ENCODE measurements at regions of chr2 and their contacts with region 1.

Region 1: DNA sequence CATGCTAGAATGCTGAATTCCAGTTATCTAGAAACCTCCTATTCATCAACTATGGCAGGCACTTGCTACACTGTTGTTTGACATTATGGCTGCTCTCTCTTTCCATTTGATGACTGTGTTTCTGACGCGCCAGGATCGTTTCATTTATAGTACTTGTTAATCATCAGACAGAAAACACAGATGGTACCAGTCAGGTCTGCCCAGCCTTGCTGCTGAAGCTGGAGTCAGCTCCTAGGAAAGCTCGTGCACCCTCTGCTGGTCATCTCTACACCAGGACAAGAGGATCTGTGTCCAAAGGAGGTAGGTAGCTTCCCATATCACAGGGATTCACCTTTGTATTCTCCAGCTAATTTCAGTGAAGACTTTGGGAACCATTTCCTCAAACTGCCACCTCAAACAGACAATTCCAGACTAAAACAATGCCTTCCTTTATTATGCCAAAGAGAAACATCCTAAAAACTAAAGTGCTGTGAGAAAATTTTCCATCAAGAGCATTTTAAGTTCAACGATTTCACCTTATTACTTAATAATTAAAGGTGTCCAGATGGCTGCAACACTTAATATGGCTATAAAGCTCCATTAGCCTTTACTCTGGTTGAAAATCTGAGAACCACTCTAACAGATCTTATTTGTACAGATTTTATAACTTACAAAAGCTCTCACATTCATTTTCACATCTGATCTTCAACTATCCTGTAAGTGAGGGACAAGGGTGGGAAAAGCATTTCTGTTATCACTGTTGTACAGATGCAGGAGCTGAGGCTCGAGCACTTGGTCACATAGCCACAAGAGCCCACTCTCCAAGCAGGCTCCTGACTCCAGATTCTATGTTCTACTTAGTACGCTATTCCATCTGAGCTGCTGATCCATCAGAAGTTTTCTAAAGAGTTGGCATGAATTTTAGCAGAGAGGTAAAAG is 17.5 kb downstream of the METTL8 start:
- DNase-seq: peak; percentile 49 to 84 (median 62)
- H3K4me3 ChIP-seq: no peak overlapping the region
- H3K4me3 Mint-ChIP-seq: peak overlapping the region in 3 of 7 donors; percentile 3 to 12 (median 3)
- H3K27ac ChIP-seq: no peak overlapping the region
- H3K27ac Mint-ChIP-seq: peak overlapping the region in 3 of 8 donors; percentile 17 to 83 (median 27)
- H3K4me1 ChIP-seq: peaks cover 4% of the 10 kb centered on the region
- H3K4me1 Mint-ChIP-seq: peaks cover 7 to 19% (median 14%) of the 10 kb centered on the region in 3 donors
- H3K27me3 ChIP-seq: no peaks in the 10 kb centered on the region
- H3K27me3 Mint-ChIP-seq: no peaks in the 10 kb centered on the region

Region 2: GRCh38 chr2:171433763-171434670 is 17.7 kb after region 1 on chr2 and contains the starts of genes DCAF17 and METTL8:
- CTCF ChIA-PET with region 1: interaction called, 12 read pairs
- POLR2A ChIA-PET with region 1: no interaction called
- DNase-seq: peak; percentile 89 to 96 (median 93)
- H3K4me3 ChIP-seq: peak within 1 kb of the TSS; percentile 89
- H3K4me3 Mint-ChIP-seq: peak within 1 kb of the TSS; percentile 84 to 93 (median 90)
- H3K27ac ChIP-seq: peak within 1 kb of the TSS; percentile 87
- H3K27ac Mint-ChIP-seq: peak within 1 kb of the TSS; percentile 67 to 98 (median 94)
- H3K4me1 ChIP-seq: peaks cover 18% of the 10 kb centered on the region
- H3K4me1 Mint-ChIP-seq: peaks cover 40 to 60% (median 60%) of the 10 kb centered on the region in 3 donors
- H3K27me3 ChIP-seq: no peaks in the 10 kb centered on the region
- H3K27me3 Mint-ChIP-seq: no peaks in the 10 kb centered on the region
- total RNA-seq, gene DCAF17: 19.3 to 19.8 TPM
- total RNA-seq, gene METTL8: 46.0 to 50.5 TPM

Measured in CD8-positive, alpha-beta memory T cell (primary cell).